Activated CD4-positive, alpha-beta T cell treated with anti-CD3 and anti-CD28 coated beads, Interleukin-2, amount 10 ng/mL, durations not matched to agents 24 days and 14 days (primary cell): ENCODE measurements at regions of chr5 and their contacts with region 1.

Region 1: GRCh38 chr5:159456722-159457465 is 126.6 kb upstream of the IL12B start:
- DNase-seq: peak; percentile 82
- H3K4me3 Mint-ChIP-seq: peak overlapping the region; percentile 15
- H3K27ac Mint-ChIP-seq: peak overlapping the region; percentile 81
- H3K4me1 Mint-ChIP-seq: peaks cover 43% of the 10 kb centered on the region
- H3K27me3 Mint-ChIP-seq: peaks cover 61% of the 10 kb centered on the region

Region 2: GRCh38 chr5:157731272-157732129 is 1725.4 kb before region 1 on chr5 and contains the start of gene THG1L:
- intact Hi-C with region 1: loop called (anchors 5 kb)
- DNase-seq: peak; percentile 100
- H3K4me3 Mint-ChIP-seq: peak within 1 kb of the TSS; percentile 97
- H3K27ac Mint-ChIP-seq: peak within 1 kb of the TSS; percentile 98
- H3K4me1 Mint-ChIP-seq: peaks cover 25% of the 10 kb centered on the region
- H3K27me3 Mint-ChIP-seq: no peaks in the 10 kb centered on the region
- total RNA-seq, gene THG1L: 25.0 and 26.7 TPM in 2 replicates

Region 3: GRCh38 chr5:158875272-158875679 is 581.6 kb before region 1 on chr5:
- intact Hi-C with region 1: loop called (anchors 2 kb)
- DNase-seq: no peak
- H3K4me3 Mint-ChIP-seq: peak overlapping the region; percentile 57
- H3K27ac Mint-ChIP-seq: peak overlapping the region; percentile 81
- H3K4me1 Mint-ChIP-seq: peaks cover 27% of the 10 kb centered on the region
- H3K27me3 Mint-ChIP-seq: peaks cover 3% of the 10 kb centered on the region

Region 4: GRCh38 chr5:159209438-159210305 is 247.2 kb before region 1 on chr5 and contains the start of gene RNF145:
- intact Hi-C with region 1: loop called (anchors 2 kb)
- DNase-seq: peak; percentile 97
- H3K4me3 Mint-ChIP-seq: peak within 1 kb of the TSS; percentile 99
- H3K27ac Mint-ChIP-seq: peak within 1 kb of the TSS; percentile 98
- H3K4me1 Mint-ChIP-seq: peaks cover 54% of the 10 kb centered on the region
- H3K27me3 Mint-ChIP-seq: no peaks in the 10 kb centered on the region
- total RNA-seq, gene RNF145: 141 and 149 TPM in 2 replicates

Region 5: GRCh38 chr5:159336991-159337955 is 119.6 kb before region 1 on chr5:
- intact Hi-C with region 1: loop called (anchors 1 kb)
- DNase-seq: peak; percentile 88
- H3K4me3 Mint-ChIP-seq: peak overlapping the region; percentile 48
- H3K27ac Mint-ChIP-seq: peak overlapping the region; percentile 76
- H3K4me1 Mint-ChIP-seq: peaks cover 64% of the 10 kb centered on the region
- H3K27me3 Mint-ChIP-seq: peaks cover 4% of the 10 kb centered on the region

Region 6: GRCh38 chr5:159515909-159516415 is 59.1 kb after region 1 on chr5:
- intact Hi-C with region 1: no loop called
- DNase-seq: peak; percentile 90
- H3K4me3 Mint-ChIP-seq: no peak overlapping the region
- H3K27ac Mint-ChIP-seq: no peak overlapping the region
- H3K4me1 Mint-ChIP-seq: peaks cover 4% of the 10 kb centered on the region
- H3K27me3 Mint-ChIP-seq: peaks cover 27% of the 10 kb centered on the region

Region 7: GRCh38 chr5:159773062-159773924 is 316.4 kb after region 1 on chr5:
- intact Hi-C with region 1: loop called (anchors 1 kb)
- DNase-seq: peak; percentile 94
- H3K4me3 Mint-ChIP-seq: peak overlapping the region; percentile 51
- H3K27ac Mint-ChIP-seq: peak overlapping the region; percentile 63
- H3K4me1 Mint-ChIP-seq: peaks cover 24% of the 10 kb centered on the region
- H3K27me3 Mint-ChIP-seq: peaks cover 25% of the 10 kb centered on the region

Region 8: DNA sequence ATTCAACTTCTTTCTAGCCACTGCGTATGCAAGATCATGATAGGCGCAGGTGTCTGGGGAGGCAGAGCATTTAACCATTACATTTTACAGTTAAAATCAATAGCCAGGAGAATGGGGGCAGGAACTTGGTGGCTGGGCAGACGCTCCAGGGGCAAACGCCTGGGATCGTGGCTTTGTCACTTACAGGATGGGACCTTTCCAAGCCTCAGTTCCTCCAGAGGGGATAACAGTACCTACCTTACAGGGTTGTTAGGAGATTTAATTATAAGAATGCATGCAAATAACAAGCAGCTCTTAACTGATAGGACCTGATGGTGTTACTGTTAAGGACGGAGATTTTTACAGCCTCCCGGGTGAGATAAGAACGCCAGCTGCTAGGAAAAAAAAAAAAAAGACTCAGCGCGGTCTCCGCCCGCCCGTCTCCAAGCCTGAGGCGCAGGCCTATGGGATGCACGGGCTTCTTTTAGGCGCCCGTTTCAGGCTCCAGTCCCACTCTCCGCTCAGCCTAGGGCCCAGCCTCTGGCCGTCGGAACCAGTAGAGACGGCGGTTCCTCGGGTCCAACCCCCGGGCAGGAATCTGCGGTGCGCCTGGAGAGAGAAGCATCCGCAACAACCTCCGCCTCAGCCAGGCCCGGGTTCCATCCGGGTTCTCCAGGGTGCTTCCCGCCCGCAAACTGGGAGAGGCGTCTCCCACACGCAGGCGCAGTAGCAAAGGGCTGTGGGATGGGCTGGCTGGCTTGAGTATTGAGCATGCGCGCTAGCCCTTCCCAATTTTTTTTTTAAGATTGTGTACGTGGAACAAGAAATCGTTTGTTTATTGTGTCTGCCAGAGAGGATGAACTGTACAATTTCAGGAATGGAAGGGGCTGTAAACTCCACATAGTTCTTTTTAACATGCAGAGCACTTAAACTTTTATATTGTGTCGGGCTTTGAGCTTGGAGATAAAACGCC is 942.8 kb after region 1 on chr5 and contains the start of gene FAM200C:
- intact Hi-C with region 1: no loop called
- DNase-seq: peak; percentile 94
- H3K4me3 Mint-ChIP-seq: peak within 1 kb of the TSS; percentile 94
- H3K27ac Mint-ChIP-seq: peak within 1 kb of the TSS; percentile 85
- H3K4me1 Mint-ChIP-seq: peaks cover 14% of the 10 kb centered on the region
- H3K27me3 Mint-ChIP-seq: peaks cover 2% of the 10 kb centered on the region
- total RNA-seq, gene FAM200C: 1.4 and 1.5 TPM in 2 replicates